MCF 10A (cell line): ENCODE measurements at regions of chr1 and their contacts with region 1.

Region 1: GRCh38 chr1:37514350-37515184 is at the start of gene MEAF6:
- DNase-seq: peak; percentile 80
- H3K4me3 Mint-ChIP-seq: peak within 1 kb of the TSS; percentile 82
- H3K27ac Mint-ChIP-seq: peak within 1 kb of the TSS; percentile 82
- H3K4me1 Mint-ChIP-seq: peaks cover 16% of the 10 kb centered on the region
- H3K27me3 Mint-ChIP-seq: no peaks in the 10 kb centered on the region
- CTCF ChIP-seq: peak; percentile 72
- total RNA-seq, gene MEAF6: 71.3 and 72.0 TPM in 2 replicates

Region 2: DNA sequence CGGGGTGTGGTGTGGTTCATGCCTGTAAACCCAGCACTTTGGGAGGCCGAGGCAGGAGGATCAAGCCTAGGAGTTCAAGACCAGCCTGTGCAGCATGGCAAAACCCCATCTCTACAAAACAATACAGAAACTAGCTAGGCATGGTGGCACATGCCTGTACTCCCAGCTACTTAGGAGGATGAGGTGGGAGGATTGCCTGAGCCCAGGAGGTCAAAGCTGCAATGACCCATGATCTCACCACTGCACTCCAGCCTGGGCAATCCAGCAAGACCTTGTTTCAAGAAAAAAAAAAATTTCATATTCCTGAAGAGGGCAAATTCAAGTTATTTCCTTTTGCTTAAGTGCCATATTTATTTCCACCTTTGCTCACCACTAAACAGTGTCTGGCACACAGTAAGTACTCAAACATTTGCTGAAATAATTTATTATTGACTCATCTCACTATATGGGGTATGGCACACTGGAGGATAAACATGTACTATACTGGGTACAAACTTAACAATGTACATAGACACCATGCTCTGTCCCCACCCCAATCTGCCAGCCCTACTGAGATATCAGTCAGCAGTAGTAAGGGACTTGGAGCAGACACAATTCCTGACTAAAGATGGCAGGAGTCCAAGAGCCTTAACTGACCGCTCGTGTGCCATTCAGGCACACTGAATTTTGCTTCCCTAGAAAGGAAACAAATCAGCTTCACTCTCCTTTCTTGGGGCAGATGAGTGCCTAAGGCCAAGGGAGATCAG is 15.5 kb before region 1 on chr1:
- CTCF ChIA-PET with region 1: interaction called, 12 read pairs
- POLR2A ChIA-PET with region 1: interaction called, 16 read pairs
- intact Hi-C with region 1: no loop called
- DNase-seq: peak; percentile 70
- H3K4me3 Mint-ChIP-seq: no peak overlapping the region
- H3K27ac Mint-ChIP-seq: peak overlapping the region; percentile 59
- H3K4me1 Mint-ChIP-seq: peaks cover 7% of the 10 kb centered on the region
- H3K27me3 Mint-ChIP-seq: no peaks in the 10 kb centered on the region
- CTCF ChIP-seq: no peak

Region 3: DNA sequence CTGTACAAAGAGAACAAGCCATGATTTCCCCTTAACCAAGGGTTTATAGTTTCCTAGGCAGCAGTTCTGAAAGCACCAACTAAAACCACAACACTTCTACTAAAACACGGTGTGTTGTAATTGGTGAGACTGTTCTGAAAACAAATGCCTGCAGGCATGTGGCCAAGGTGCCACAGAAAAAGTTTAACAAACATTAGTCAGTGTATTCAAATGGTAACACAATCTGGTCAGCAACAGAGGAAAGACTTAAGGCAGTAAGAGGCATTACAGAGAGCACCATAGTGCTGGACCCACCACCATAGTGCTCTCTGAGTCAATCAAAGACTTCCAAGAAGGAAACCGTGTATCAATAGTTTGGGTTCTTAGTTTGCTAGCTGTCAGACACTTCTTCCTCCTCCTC is 22.8 kb after region 1 on chr1:
- CTCF ChIA-PET with region 1: interaction called, 18 read pairs
- POLR2A ChIA-PET with region 1: interaction called, 35 read pairs
- intact Hi-C with region 1: no loop called
- DNase-seq: peak; percentile 91
- H3K4me3 Mint-ChIP-seq: peak overlapping the region; percentile 22
- H3K27ac Mint-ChIP-seq: peak overlapping the region; percentile 89
- H3K4me1 Mint-ChIP-seq: peaks cover 29% of the 10 kb centered on the region
- H3K27me3 Mint-ChIP-seq: no peaks in the 10 kb centered on the region
- CTCF ChIP-seq: no peak

Region 4: GRCh38 chr1:37553927-37554808 is 39.6 kb after region 1 on chr1 and contains the start of gene SNIP1:
- CTCF ChIA-PET with region 1: interaction called, 4 read pairs
- POLR2A ChIA-PET with region 1: interaction called, 22 read pairs
- intact Hi-C with region 1: loop called (anchors 5 kb)
- DNase-seq: peak; percentile 94
- H3K4me3 Mint-ChIP-seq: peak within 1 kb of the TSS; percentile 96
- H3K27ac Mint-ChIP-seq: peak within 1 kb of the TSS; percentile 99
- H3K4me1 Mint-ChIP-seq: peaks cover 16% of the 10 kb centered on the region
- H3K27me3 Mint-ChIP-seq: no peaks in the 10 kb centered on the region
- CTCF ChIP-seq: no peak
- total RNA-seq, gene SNIP1: 26.4 and 32.0 TPM in 2 replicates